Activated CD4-positive, alpha-beta memory T cell treated with anti-CD3 and anti-CD28 coated beads for 36 hours (primary cell): ENCODE measurements at regions of chr16 and their contacts with region 1.

Region 1: GRCh38 chr16:10494343-10495028 is 85.9 kb downstream of the EMP2 start:
- DNase-seq: peak; percentile 55
- H3K4me3 Mint-ChIP-seq: no peak overlapping the region
- H3K27ac Mint-ChIP-seq: peak overlapping the region; percentile 53
- H3K4me1 Mint-ChIP-seq: peaks cover 5% of the 10 kb centered on the region
- H3K27me3 Mint-ChIP-seq: no peaks in the 10 kb centered on the region

Region 2: GRCh38 chr16:10325783-10326543 is 168.5 kb before region 1 on chr16:
- CTCF ChIA-PET with region 1: no interaction called
- POLR2A ChIA-PET with region 1: no interaction called
- intact Hi-C with region 1: loop called (anchors 5 kb)
- DNase-seq: no peak
- H3K4me3 Mint-ChIP-seq: no peak overlapping the region
- H3K27ac Mint-ChIP-seq: no peak overlapping the region
- H3K4me1 Mint-ChIP-seq: peaks cover 13% of the 10 kb centered on the region
- H3K27me3 Mint-ChIP-seq: no peaks in the 10 kb centered on the region